ENCODE measurements at regions of chr6 and their contacts with region 1.

Region 1: DNA sequence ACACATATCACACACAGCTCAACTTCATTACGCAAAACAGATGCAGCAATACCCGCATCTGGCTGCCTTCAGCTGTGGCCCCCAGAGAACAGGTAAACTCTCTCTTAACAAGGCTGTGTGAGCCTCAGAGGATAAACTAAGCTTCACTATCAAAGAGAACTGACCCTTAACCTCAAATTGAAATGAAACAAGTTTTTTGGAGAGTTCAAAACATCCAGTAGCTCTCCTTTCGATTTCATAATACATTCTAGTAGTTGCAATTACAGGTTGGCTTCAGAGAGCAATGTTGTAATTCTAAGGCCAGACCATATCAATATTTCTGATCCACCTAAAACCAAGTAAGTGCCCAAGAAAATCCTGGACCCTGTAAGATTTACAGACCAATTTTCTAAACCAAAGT is 113.5 kb downstream of the FAXC start:
- DNase-seq: no peak
- H3K4me3 Mint-ChIP-seq: no peak overlapping the region
- H3K27ac Mint-ChIP-seq: no peak overlapping the region
- H3K4me1 Mint-ChIP-seq: no peaks in the 10 kb centered on the region
- H3K27me3 Mint-ChIP-seq: peaks cover 88% of the 10 kb centered on the region
- CTCF ChIP-seq: no peak

Region 2: DNA sequence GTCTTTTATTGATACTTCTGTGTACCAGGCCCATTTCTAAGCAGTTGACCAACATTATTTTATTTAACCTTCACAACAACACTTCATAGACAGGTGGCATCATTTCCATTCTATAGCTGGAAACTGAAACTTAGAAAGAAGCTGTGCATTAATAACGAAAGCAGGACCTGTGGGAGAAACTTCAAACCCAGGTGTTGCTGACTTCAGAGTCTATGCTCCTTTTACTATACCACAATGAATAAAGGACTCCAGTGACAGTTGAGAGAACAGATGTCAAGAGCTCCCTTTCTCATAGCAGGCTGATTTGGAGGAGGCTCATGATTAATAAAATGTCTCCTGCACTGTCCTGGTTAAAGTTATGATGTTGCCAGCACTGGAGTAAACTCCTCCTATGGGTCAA is 458.2 kb before region 1 on chr6:
- CTCF ChIA-PET with region 1: no interaction called
- intact Hi-C with region 1: loop called (anchors 5 kb)
- DNase-seq: no peak
- H3K4me3 Mint-ChIP-seq: no peak overlapping the region
- H3K27ac Mint-ChIP-seq: no peak overlapping the region
- H3K4me1 Mint-ChIP-seq: peaks cover 29% of the 10 kb centered on the region
- H3K27me3 Mint-ChIP-seq: peaks cover 13% of the 10 kb centered on the region
- CTCF ChIP-seq: no peak

Region 3: DNA sequence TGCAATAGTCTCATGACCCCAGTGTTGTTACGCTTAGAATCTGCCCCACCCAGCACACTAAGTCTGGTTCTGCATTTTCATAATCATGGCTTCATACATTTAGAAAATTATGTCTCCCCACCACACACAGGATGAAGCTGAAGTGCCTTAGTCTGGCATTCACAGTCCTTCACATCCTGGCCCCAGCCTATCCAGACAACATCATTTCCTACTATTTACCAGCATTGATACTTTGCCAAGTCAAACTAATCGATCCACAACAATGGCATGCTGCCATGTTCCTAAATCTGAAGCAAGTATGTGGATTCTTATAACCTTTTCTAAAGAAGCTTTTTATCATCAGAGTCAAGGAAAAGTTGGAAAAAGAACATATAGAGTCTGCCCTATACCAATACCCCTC is 155.8 kb before region 1 on chr6:
- CTCF ChIA-PET with region 1: no interaction called
- intact Hi-C with region 1: no loop called
- DNase-seq: peak; percentile 24
- H3K4me3 Mint-ChIP-seq: no peak overlapping the region
- H3K27ac Mint-ChIP-seq: no peak overlapping the region
- H3K4me1 Mint-ChIP-seq: peaks cover 7% of the 10 kb centered on the region
- H3K27me3 Mint-ChIP-seq: peaks cover 79% of the 10 kb centered on the region
- CTCF ChIP-seq: no peak

Region 4: DNA sequence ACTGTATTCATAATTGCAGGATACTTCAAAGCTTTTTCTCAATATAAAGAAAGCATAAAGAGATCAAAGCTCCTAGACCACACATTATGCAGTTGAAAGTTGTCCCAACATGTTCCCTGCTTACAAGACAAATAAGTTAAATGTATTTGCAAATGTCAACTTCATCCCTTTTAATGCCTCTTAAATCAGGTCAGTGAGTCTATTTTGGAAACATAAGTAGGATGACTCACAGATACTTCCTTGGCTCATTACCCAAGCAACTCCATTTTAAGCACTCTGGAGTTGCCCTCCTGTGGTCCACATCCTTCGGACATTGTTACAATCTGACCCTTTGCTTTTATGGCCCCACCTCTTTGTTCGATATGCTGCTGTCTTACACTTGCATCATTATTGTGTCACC is 48.6 kb before region 1 on chr6:
- CTCF ChIA-PET with region 1: no interaction called
- intact Hi-C with region 1: no loop called
- DNase-seq: no peak
- H3K4me3 Mint-ChIP-seq: no peak overlapping the region
- H3K27ac Mint-ChIP-seq: no peak overlapping the region
- H3K4me1 Mint-ChIP-seq: no peaks in the 10 kb centered on the region
- H3K27me3 Mint-ChIP-seq: no peaks in the 10 kb centered on the region
- CTCF ChIP-seq: no peak

Region 5: GRCh38 chr6:99270826-99271225 is 34.8 kb after region 1 on chr6:
- CTCF ChIA-PET with region 1: no interaction called
- intact Hi-C with region 1: no loop called
- DNase-seq: no peak
- H3K4me3 Mint-ChIP-seq: no peak overlapping the region
- H3K27ac Mint-ChIP-seq: no peak overlapping the region
- H3K4me1 Mint-ChIP-seq: no peaks in the 10 kb centered on the region
- H3K27me3 Mint-ChIP-seq: peaks cover 28% of the 10 kb centered on the region
- CTCF ChIP-seq: no peak

Region 6: GRCh38 chr6:99467509-99468106 is 231.6 kb after region 1 on chr6:
- CTCF ChIA-PET with region 1: no interaction called
- intact Hi-C with region 1: no loop called
- DNase-seq: no peak
- H3K4me3 Mint-ChIP-seq: no peak overlapping the region
- H3K27ac Mint-ChIP-seq: no peak overlapping the region
- H3K4me1 Mint-ChIP-seq: no peaks in the 10 kb centered on the region
- H3K27me3 Mint-ChIP-seq: no peaks in the 10 kb centered on the region
- CTCF ChIP-seq: peak; percentile 61

Measured in Calu3 (cell line).